Endothelial cell of umbilical vein (primary cell): ENCODE measurements at regions of chr10 and their contacts with region 1.

Region 1: GRCh38 chr10:58177362-58177947 is 90.2 kb downstream of the IPMK start:
- DNase-seq: peak; percentile 44
- H3K4me3 ChIP-seq: no peak overlapping the region
- H3K27ac ChIP-seq: no peak overlapping the region
- H3K4me1 ChIP-seq: no peaks in the 10 kb centered on the region
- H3K27me3 ChIP-seq: peaks cover 0 to 3% of the 10 kb centered on the region in 2 experiments
- CTCF ChIP-seq: peak; percentile 32 to 33
- POLR2A ChIP-seq: no peak

Region 2: DNA sequence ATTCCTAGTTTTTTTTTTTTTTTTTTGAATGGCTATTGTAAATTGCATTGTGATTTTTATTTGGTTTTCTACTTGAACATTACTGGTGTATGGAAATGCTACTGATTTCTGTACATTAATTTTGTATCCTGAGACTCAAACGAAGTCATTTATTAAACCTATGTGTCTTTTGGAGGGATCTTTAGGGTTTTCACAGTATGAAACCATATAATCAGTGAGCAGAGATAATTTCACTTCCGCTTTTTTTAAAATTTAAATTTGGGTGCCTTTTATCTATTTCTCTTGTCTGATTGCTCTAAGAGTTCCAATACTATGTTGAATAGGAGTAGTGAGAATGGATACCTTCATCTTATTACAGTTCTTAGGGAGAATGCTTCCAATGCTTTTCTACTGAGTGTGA is 1919.1 kb before region 1 on chr10:
- CTCF ChIA-PET with region 1: no interaction called
- POLR2A ChIA-PET with region 1: no interaction called
- dilution Hi-C with region 1: no loop called
- intact Hi-C with region 1: no loop called
- DNase-seq: no peak
- H3K4me3 ChIP-seq: no peak overlapping the region
- H3K27ac ChIP-seq: no peak overlapping the region
- H3K4me1 ChIP-seq: no peaks in the 10 kb centered on the region
- H3K27me3 ChIP-seq: no peaks in the 10 kb centered on the region
- CTCF ChIP-seq: no peak
- POLR2A ChIP-seq: no peak

Region 3: DNA sequence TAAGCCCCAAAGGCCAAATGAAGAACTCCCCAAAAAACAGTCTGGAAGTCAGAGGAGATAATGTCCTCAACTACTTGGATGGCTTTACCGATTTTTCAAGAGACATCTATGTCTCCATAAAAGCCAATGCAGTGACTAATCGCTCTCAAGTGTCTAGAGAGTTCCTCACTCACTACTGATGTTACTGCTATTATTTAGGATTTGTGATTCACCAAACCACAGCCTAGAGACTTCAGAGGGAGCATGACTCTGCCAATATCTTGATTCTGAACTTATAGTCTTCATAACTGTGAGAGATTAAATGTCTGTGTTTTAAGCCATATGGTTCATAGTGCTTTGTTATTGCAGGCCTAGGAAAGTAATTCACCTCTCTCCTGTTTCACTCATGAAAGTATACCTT is 69.9 kb before region 1 on chr10:
- CTCF ChIA-PET with region 1: no interaction called
- POLR2A ChIA-PET with region 1: no interaction called
- dilution Hi-C with region 1: no loop called
- intact Hi-C with region 1: no loop called
- DNase-seq: no peak
- H3K4me3 ChIP-seq: no peak overlapping the region
- H3K27ac ChIP-seq: no peak overlapping the region
- H3K4me1 ChIP-seq: no peaks in the 10 kb centered on the region
- H3K27me3 ChIP-seq: no peaks in the 10 kb centered on the region
- CTCF ChIP-seq: no peak
- POLR2A ChIP-seq: no peak

Region 4: DNA sequence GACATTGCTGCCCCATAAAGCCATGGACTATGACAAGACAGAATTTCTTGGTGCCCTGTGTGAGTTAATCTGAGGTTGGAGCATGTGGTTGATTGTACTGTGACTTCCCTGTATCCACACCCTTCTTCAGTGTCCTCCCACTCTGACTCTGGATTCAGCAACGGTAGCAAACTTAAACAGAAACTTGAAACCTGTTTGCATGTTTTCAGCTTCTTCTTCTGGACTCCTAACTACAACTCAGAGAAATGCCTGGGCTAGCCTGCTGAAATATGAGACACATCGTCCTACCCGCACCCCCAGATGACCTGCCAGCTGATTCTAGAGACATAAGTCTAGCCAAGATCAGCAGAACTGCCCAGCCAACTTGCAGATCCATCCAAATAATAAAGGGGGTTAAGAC is 11.8 kb after region 1 on chr10:
- CTCF ChIA-PET with region 1: interaction called, 18 read pairs
- POLR2A ChIA-PET with region 1: no interaction called
- dilution Hi-C with region 1: no loop called
- intact Hi-C with region 1: no loop called
- DNase-seq: no peak
- H3K4me3 ChIP-seq: no peak overlapping the region
- H3K27ac ChIP-seq: no peak overlapping the region
- H3K4me1 ChIP-seq: no peaks in the 10 kb centered on the region
- H3K27me3 ChIP-seq: peaks cover 0 to 2% of the 10 kb centered on the region in 2 experiments
- CTCF ChIP-seq: no peak
- POLR2A ChIP-seq: no peak

Region 5: DNA sequence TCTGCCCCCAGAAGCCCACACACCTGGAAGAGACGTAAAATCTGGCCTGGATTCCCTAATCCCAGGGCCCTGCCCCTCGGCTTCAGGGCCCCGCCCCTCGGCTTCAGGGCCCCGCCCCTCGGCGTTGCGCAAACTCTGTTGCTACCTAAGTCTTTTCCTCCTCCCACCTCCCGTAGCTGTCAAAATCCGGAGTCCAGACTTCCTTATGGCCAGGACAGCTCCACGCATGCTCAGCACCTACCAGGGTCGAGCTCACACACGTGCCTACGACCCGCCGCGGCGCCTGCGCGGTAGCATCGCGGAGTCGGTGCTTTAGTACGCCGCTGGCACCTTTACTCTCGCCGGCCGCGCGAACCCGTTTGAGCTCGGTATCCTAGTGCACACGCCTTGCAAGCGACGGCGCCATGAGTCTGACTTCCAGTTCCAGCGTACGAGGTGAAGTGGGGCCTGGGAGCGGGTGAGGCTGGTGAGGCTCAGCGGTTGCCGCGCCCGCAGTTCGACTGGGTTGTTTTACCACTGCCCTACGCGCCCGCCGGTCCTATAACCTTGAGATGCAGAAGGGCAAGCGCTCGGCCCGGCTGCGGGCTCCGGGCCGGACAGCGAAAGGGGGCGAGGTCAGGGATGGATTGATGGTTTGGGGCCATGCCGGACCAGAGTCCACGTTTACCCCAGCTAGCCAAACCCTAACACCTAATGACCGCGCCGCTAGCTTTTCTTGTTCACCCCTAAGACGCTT is 91.6 kb after region 1 on chr10 and contains the start of gene CISD1:
- CTCF ChIA-PET with region 1: interaction called, 14 read pairs
- POLR2A ChIA-PET with region 1: interaction called, 3 read pairs
- dilution Hi-C with region 1: no loop called
- intact Hi-C with region 1: loop called (anchors 1 kb)
- DNase-seq: peak; percentile 99
- H3K4me3 ChIP-seq: peak within 1 kb of the TSS; percentile 62 to 82 (median 77)
- H3K27ac ChIP-seq: peak within 1 kb of the TSS; percentile 92
- H3K4me1 ChIP-seq: peaks cover 45% of the 10 kb centered on the region
- H3K27me3 ChIP-seq: no peaks in the 10 kb centered on the region
- CTCF ChIP-seq: no peak
- POLR2A ChIP-seq: peak; percentile 23
- total RNA-seq, gene CISD1: 53.0 and 57.3 TPM in 2 replicates

Region 6: DNA sequence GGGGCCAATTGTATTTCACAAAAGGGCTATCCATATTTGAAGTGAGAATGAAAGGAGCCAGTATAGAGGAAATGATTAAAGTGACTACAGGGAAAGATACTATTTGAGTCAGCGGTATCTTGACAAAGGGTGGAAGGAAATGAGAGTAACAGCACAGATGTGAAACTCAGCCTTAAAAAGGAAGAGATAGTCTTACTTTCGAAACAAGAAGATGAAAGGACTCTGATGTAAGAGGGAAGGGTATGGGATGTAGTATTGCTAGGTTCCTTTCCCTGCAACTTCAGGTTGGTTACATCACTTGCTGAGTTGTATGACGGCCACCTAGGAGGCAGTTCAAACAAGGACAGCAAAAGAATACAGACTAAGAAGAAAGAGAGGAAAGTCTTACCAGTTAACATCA is 105.2 kb after region 1 on chr10:
- CTCF ChIA-PET with region 1: interaction called, 16 read pairs
- POLR2A ChIA-PET with region 1: no interaction called
- dilution Hi-C with region 1: no loop called
- intact Hi-C with region 1: no loop called
- DNase-seq: peak; percentile 93
- H3K4me3 ChIP-seq: peak overlapping the region in 1 of 3 experiments; percentile 35
- H3K27ac ChIP-seq: peak overlapping the region; percentile 87
- H3K4me1 ChIP-seq: peaks cover 41% of the 10 kb centered on the region
- H3K27me3 ChIP-seq: no peaks in the 10 kb centered on the region
- CTCF ChIP-seq: no peak
- POLR2A ChIP-seq: no peak

Region 7: GRCh38 chr10:58384999-58385783 is 207.7 kb after region 1 on chr10 and contains the start of gene TFAM:
- CTCF ChIA-PET with region 1: interaction called, 10 read pairs
- POLR2A ChIA-PET with region 1: no interaction called
- dilution Hi-C with region 1: no loop called
- intact Hi-C with region 1: loop called (anchors 2 kb)
- DNase-seq: peak; percentile 97
- H3K4me3 ChIP-seq: peak within 1 kb of the TSS; percentile 55 to 90 (median 64)
- H3K27ac ChIP-seq: peak within 1 kb of the TSS; percentile 26
- H3K4me1 ChIP-seq: peaks cover 16% of the 10 kb centered on the region
- H3K27me3 ChIP-seq: no peaks in the 10 kb centered on the region
- CTCF ChIP-seq: peak; percentile 59 to 74
- POLR2A ChIP-seq: peak; percentile 92
- total RNA-seq, gene TFAM: 45.1 and 53.0 TPM in 2 replicates

Region 8: DNA sequence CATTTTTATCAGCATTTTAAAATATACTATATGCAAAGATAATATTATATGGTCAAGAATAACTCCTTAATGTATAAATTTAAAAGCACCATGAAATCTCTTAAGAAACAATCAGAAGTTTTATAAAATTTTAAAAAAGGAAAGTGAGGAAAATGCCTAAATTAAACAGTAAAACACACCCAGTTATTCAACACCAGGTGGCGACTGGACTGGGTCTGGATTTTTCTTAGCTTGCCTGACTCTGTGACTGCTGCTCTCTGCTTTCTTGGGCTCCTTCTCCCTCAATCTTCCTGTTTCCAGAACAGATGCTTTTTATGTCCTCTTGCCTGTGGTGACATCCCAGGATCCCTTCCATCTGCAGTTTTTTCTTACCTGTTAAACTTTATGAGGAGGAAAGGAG is 535.5 kb after region 1 on chr10:
- CTCF ChIA-PET with region 1: no interaction called
- POLR2A ChIA-PET with region 1: no interaction called
- dilution Hi-C with region 1: no loop called
- intact Hi-C with region 1: no loop called
- DNase-seq: no peak
- H3K4me3 ChIP-seq: no peak overlapping the region
- H3K27ac ChIP-seq: no peak overlapping the region
- H3K4me1 ChIP-seq: no peaks in the 10 kb centered on the region
- H3K27me3 ChIP-seq: no peaks in the 10 kb centered on the region
- CTCF ChIP-seq: no peak
- POLR2A ChIP-seq: no peak

Region 9: GRCh38 chr10:59885430-59886134 is 1708.1 kb after region 1 on chr10:
- CTCF ChIA-PET with region 1: no interaction called
- POLR2A ChIA-PET with region 1: no interaction called
- dilution Hi-C with region 1: no loop called
- intact Hi-C with region 1: no loop called
- DNase-seq: no peak
- H3K4me3 ChIP-seq: no peak overlapping the region
- H3K27ac ChIP-seq: no peak overlapping the region
- H3K4me1 ChIP-seq: no peaks in the 10 kb centered on the region
- H3K27me3 ChIP-seq: no peaks in the 10 kb centered on the region
- CTCF ChIP-seq: no peak
- POLR2A ChIP-seq: no peak